Left ventricle myocardium superior (tissue), 1 donor: ENCODE measurements at regions of chr10 and their contacts with region 1.

Region 1: GRCh38 chr10:94443047-94443446 is 40.7 kb downstream of the TBC1D12 start:
- DNase-seq: no peak
- ATAC-seq: no peak

Region 2: GRCh38 chr10:94279835-94280709 is 163.0 kb before region 1 on chr10:
- intact Hi-C with region 1: loop called (anchors 5 kb)
- DNase-seq: peak; percentile 56
- ATAC-seq: peak; percentile 74

Region 3: DNA sequence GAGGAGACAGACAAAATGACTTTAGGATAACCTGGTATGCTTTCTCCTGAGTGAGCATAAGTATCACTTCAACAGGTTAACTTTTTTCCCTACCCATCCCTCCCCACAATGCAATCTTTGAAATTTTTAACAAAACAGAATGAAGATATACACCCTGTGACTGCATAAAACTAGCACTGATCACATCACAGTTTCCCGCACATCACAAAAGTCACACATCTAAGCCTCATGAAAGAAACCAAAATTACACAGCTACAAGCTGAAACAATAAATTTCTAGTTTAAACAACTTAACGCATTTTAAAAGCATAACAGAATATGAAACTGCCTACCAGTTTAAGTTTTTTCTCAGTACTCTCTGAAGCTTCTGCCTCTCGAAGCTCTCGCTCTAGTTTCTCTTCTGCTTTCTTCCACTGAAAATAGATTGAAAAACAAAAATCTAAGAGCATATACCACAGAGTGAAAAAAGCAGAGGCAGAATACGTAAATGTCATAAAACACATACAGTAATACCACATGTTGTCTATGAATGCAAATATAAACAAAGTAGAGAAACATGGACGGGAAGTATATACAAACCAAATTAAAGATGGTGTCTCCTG is 98.4 kb before region 1 on chr10:
- intact Hi-C with region 1: no loop called
- DNase-seq: no peak
- ATAC-seq: no peak

Region 4: GRCh38 chr10:94545391-94546048 is 102.5 kb after region 1 on chr10 and contains the start of gene HELLS:
- intact Hi-C with region 1: no loop called
- DNase-seq: peak; percentile 81
- ATAC-seq: peak; percentile 93
- total RNA-seq, gene HELLS: 0.82 TPM